ENCODE measurements at regions of chr3 and their contacts with region 1.

Region 1: GRCh38 chr3:101809178-101810021 is 30.4 kb downstream of the NXPE3 start:
- DNase-seq: peak; percentile 74
- ATAC-seq: peak; percentile 78
- H3K4me3 ChIP-seq: no peak overlapping the region
- H3K27ac ChIP-seq: peak overlapping the region; percentile 58
- H3K4me1 ChIP-seq: peaks cover 19% of the 10 kb centered on the region
- H3K27me3 ChIP-seq: no peaks in the 10 kb centered on the region
- CTCF ChIP-seq: peak; percentile 93

Region 2: DNA sequence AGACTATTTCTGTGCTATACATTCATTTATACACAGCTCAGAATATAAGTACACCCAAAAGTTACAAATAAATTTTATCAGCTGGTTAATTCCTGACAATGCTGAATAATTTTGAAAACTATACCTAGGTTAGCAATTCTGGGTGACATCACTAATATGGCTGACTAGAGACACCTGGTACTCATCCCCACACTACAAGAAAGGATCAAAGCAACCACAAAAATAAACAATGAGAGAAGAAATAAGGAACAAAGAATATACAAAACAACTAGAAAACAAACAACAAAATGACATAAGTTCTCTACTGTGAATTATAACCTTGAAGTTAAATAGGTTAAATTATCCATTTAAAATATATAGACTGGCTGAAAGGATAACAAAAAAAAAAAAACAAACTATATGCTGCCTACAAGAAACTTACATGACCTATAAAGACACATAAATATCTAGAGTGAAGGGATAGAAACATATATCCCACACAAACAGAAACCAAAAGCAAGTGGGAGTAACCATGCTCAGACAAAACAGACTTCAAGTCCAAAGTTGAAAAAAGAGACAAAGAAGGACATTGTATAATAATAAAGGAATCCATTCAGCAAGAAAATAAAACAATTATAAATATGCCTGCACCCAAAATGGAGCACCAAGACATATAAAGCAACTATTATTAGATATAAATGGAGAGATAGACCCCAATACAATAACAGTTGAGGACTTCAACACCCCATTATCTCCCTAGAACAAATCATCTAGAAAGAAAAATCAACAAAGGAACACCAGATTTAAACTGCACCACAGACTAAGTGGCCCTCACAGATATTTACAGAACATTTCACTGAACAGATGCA is 546.8 kb before region 1 on chr3:
- CTCF ChIA-PET with region 1: no interaction called
- POLR2A ChIA-PET with region 1: no interaction called
- intact Hi-C with region 1: no loop called
- DNase-seq: no peak
- ATAC-seq: no peak
- H3K4me3 ChIP-seq: no peak overlapping the region
- H3K27ac ChIP-seq: no peak overlapping the region
- H3K4me1 ChIP-seq: no peaks in the 10 kb centered on the region
- H3K27me3 ChIP-seq: no peaks in the 10 kb centered on the region
- CTCF ChIP-seq: no peak

Region 3: DNA sequence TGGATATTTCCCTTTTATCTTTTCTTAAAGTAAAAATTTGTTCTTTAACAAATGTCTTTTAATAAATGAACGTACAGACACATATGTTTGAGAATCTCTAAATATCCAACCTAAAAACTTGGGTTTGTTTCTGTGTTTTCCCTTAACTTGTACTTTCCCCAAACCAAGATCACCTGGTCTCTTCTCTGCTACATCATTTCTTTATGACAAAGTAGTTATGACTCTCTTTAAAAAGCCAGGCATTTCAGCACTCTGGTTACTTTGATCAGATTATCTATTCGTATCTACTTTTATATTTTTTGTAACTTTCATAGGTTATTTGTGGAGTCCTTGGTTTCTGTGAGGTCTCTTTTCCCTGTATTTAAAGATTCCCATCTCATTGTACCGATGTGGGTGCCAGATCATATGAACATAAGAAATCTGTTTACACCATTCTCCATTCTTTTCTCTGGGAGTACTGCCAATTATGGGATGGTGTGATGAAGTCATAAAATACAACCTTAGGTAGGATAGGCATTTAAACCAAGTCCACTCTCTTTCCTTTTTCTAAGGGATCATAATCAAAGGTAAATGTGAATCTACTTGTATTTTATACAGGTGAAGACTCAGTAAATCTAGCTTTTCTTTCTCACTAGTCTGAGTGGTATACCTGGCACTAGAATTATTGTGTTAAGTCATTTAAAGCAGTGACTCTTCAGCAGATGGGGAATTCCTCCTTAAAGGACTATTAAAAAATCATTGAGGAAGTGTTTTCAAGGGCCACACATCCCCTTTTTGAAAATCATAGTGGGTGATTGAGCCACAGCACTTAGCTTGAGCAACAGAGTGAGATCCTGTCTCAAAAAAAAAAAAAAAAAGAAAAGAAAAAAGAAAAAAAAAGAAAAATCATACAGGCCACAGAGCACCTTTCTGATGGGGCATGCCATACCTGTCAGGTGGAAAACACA is 27.5 kb after region 1 on chr3:
- CTCF ChIA-PET with region 1: no interaction called
- POLR2A ChIA-PET with region 1: no interaction called
- intact Hi-C with region 1: no loop called
- DNase-seq: peak; percentile 67
- ATAC-seq: peak; percentile 81
- H3K4me3 ChIP-seq: no peak overlapping the region
- H3K27ac ChIP-seq: no peak overlapping the region
- H3K4me1 ChIP-seq: peaks cover 8% of the 10 kb centered on the region; the same call in 1 of the 2 replicates
- H3K27me3 ChIP-seq: no peaks in the 10 kb centered on the region
- CTCF ChIP-seq: no peak

Region 4: GRCh38 chr3:101849051-101849720 is 39.8 kb after region 1 on chr3 and contains the start of gene NFKBIZ:
- CTCF ChIA-PET with region 1: interaction called, 4 read pairs
- POLR2A ChIA-PET with region 1: no interaction called
- intact Hi-C with region 1: loop called (anchors 1 kb)
- DNase-seq: peak; percentile 95
- ATAC-seq: peak; percentile 77
- H3K4me3 ChIP-seq: peak within 1 kb of the TSS; percentile 98
- H3K27ac ChIP-seq: peak within 1 kb of the TSS; percentile 76
- H3K4me1 ChIP-seq: peaks cover 23% of the 10 kb centered on the region
- H3K27me3 ChIP-seq: no peaks in the 10 kb centered on the region
- CTCF ChIP-seq: no peak
- total RNA-seq, gene NFKBIZ: 63.0 and 70.2 TPM in 2 replicates

Region 5: GRCh38 chr3:102006812-102007485 is 197.5 kb after region 1 on chr3:
- CTCF ChIA-PET with region 1: no interaction called
- POLR2A ChIA-PET with region 1: no interaction called
- intact Hi-C with region 1: loop called (anchors 2 kb)
- DNase-seq: peak; percentile 95
- ATAC-seq: peak; percentile 96
- H3K4me3 ChIP-seq: peak overlapping the region; percentile 20; the same call in 1 of the 2 replicates
- H3K27ac ChIP-seq: peak overlapping the region; percentile 92
- H3K4me1 ChIP-seq: peaks cover 26% of the 10 kb centered on the region
- H3K27me3 ChIP-seq: no peaks in the 10 kb centered on the region
- CTCF ChIP-seq: no peak

Region 6: DNA sequence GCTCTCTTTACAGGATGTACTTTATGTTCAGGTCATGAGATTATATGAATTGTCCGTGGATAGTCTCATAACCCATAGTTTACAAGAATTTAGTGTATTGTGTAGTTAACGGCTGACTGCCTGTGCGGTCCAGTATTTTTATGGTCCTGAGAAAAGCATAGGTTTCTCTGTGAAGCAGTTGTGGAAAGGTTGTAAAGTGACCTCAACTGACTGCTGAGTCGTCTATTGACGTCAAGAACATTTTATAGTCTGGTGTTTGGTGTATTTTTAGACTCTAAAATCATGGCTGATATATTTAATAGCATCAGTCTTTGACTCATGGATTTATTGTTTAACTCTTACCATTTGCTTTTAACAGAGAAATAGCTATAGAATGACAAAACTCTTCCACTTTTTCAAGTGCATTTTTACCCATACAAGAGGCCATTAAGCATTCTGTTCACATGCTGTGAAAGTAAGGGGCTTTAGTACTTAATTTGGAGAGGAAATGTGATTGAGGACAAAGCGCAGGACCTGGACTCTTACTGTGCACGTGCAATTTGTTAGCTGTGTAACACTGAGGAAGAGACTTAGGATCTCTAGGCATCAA is 280.6 kb after region 1 on chr3:
- CTCF ChIA-PET with region 1: no interaction called
- POLR2A ChIA-PET with region 1: no interaction called
- intact Hi-C with region 1: loop called (anchors 5 kb)
- DNase-seq: peak; percentile 89
- ATAC-seq: peak; percentile 89
- H3K4me3 ChIP-seq: no peak overlapping the region
- H3K27ac ChIP-seq: peak overlapping the region; percentile 97
- H3K4me1 ChIP-seq: peaks cover 30% of the 10 kb centered on the region
- H3K27me3 ChIP-seq: no peaks in the 10 kb centered on the region
- CTCF ChIP-seq: no peak

Region 7: DNA sequence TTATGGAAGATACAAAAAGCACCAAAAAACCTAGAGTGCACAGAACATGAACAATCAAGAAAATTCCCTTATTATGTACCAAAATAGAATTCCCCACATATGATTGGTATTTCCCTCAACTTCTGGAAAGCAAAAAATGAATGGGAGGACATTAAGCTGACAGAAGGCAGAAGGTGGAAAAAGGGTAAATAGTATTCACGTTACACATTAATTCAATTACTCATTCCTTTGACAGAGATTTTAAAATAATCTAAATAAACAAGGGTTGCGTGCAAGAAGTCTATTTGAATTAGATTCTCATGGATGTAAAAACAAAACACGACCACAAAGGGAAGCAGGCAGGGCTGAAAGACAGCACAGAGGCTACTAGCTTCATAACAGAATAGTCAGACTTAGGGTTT is 364.9 kb after region 1 on chr3:
- CTCF ChIA-PET with region 1: interaction called, 4 read pairs
- POLR2A ChIA-PET with region 1: interaction called, 3 read pairs
- intact Hi-C with region 1: loop called (anchors 2 kb)
- DNase-seq: peak; percentile 91
- ATAC-seq: peak; percentile 82
- H3K4me3 ChIP-seq: 0 out of 2 replicates have a peak overlapping the region, but pooled peaks have one; percentile 7
- H3K27ac ChIP-seq: peak overlapping the region; percentile 97
- H3K4me1 ChIP-seq: peaks cover 42% of the 10 kb centered on the region
- H3K27me3 ChIP-seq: no peaks in the 10 kb centered on the region
- CTCF ChIP-seq: no peak

Region 8: DNA sequence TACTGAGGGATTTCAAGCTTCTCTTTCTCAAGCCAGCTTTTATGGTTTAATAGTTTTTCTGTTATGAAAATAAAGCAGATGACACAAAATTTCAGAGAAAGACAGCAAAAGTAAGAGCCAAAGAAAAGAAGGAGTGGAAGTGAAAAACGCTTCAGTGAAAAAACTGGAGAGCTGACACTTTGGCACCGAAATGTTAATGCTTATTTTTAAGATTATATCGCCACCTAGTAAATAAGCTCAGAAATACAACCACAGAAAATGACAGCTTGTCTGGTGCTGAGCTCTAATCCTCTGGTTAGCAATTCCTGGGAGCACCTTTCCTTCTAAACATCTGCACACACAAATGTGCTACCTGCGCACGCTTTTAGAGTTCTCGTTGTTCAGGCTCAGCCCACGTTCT is 727.1 kb after region 1 on chr3:
- CTCF ChIA-PET with region 1: no interaction called
- POLR2A ChIA-PET with region 1: no interaction called
- intact Hi-C with region 1: loop called (anchors 2 kb)
- DNase-seq: peak; percentile 84
- ATAC-seq: peak; percentile 82
- H3K4me3 ChIP-seq: no peak overlapping the region
- H3K27ac ChIP-seq: no peak overlapping the region
- H3K4me1 ChIP-seq: peaks cover 19% of the 10 kb centered on the region
- H3K27me3 ChIP-seq: no peaks in the 10 kb centered on the region
- CTCF ChIP-seq: peak; percentile 76

Region 9: GRCh38 chr3:102715030-102715697 is 905.8 kb after region 1 on chr3:
- CTCF ChIA-PET with region 1: no interaction called
- POLR2A ChIA-PET with region 1: no interaction called
- intact Hi-C with region 1: no loop called
- DNase-seq: peak; percentile 59
- ATAC-seq: peak; percentile 61
- H3K4me3 ChIP-seq: no peak overlapping the region
- H3K27ac ChIP-seq: no peak overlapping the region
- H3K4me1 ChIP-seq: peaks cover 6% of the 10 kb centered on the region
- H3K27me3 ChIP-seq: peaks cover 19% of the 10 kb centered on the region
- CTCF ChIP-seq: no peak

Measured in PC-3 (cell line).